ENCODE measurements at regions of chr6 and their contacts with region 1.

Region 1: DNA sequence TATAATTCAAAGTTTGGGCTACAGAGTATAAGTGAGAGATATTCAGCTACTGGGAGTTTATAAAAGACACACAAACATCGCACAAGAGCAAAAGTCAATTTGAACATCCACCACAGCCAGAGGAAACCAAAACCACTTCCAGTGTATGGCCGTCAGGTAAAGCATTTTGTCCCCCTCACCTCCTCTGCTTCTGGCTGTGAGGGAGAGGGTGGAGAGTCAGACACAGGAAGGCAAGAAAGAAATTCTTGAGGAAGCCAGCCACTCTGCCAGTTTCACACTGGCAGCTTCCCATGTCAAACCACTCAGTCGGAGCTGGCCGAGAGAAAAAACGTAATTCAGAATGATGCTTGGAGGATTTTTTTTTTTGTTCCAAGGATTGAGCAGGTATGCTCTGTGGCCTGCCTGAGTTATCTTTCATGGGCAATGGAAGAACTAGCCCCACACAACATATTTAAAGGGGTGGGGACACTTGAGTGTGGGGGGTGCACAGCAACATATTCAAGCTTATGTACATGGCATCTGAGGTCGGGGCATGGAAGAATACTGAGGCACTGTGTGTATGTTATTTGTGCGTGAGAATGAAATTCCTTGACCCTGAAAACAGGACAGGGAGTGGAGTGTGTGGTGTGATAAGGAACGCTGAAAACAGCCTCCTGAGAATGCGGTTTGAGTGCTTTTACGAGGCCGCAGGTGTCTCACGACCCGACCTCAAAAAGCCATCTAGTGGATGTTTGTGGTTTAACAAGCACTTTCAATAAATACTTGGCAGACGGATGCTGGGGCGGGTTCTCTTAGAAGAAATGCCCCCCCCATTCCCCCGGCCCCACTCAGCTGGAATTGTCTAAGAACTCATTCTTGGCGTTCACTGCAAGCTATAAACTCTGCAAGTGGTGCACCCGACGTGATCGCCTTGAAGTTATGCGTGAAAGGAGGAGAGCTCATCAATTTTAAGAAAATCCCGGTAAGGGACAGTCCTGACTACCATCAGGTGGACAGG is 27.5 kb upstream of the ZBTB22 start:
- DNase-seq: peak; percentile 78
- H3K4me3 Mint-ChIP-seq: no peak overlapping the region
- H3K27ac Mint-ChIP-seq: no peak overlapping the region
- H3K4me1 Mint-ChIP-seq: peaks cover 15% of the 10 kb centered on the region
- H3K27me3 Mint-ChIP-seq: no peaks in the 10 kb centered on the region
- CTCF ChIP-seq: peak; percentile 62

Region 2: DNA sequence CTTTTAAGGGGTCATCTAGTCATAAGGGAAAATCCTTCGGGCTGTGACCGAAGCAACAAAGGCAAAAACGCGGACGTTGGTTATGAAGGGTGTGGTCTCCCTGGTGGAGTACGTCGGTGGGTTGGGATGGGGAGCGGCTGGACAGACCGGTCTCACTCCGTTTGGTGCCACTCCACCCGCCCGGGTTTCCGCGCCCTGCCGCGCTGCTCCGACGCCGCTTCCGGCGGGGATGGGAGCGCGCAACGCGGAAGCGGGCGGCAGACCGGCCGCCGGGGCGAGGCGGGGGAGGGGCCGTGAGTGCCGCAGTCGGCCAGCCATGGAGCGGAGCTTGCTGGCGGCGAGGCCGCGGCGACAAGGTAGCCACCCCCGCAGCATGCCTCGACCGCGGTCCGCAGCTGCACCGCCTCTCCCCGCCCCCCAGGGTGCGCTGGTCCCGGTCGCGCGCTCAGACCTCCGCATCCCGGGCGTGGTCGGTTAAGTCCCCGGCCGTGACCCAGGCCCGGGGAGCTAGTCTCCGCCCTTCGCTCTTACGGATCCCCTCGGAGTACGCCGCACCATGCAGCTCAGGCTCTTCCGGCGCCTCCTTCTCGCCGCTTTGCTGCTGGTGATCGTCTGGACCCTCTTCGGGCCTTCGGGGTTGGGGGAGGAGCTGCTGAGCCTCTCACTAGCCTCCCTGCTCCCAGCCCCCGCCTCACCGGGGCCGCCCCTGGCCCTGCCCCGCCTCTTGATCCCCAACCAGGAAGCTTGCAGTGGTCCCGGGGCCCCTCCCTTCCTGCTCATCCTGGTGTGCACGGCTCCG is 67.9 kb before region 1 on chr6 and contains the start of gene B3GALT4:
- CTCF ChIA-PET with region 1: no interaction called
- POLR2A ChIA-PET with region 1: interaction called, 3 read pairs
- intact Hi-C with region 1: loop called (anchors 5 kb)
- DNase-seq: peak; percentile 72
- H3K4me3 Mint-ChIP-seq: peak within 1 kb of the TSS; percentile 99
- H3K27ac Mint-ChIP-seq: peak within 1 kb of the TSS; percentile 80
- H3K4me1 Mint-ChIP-seq: peaks cover 30% of the 10 kb centered on the region
- H3K27me3 Mint-ChIP-seq: no peaks in the 10 kb centered on the region
- CTCF ChIP-seq: peak; percentile 52
- total RNA-seq, gene B3GALT4: 0.37 and 0.58 TPM in 2 replicates

Region 3: DNA sequence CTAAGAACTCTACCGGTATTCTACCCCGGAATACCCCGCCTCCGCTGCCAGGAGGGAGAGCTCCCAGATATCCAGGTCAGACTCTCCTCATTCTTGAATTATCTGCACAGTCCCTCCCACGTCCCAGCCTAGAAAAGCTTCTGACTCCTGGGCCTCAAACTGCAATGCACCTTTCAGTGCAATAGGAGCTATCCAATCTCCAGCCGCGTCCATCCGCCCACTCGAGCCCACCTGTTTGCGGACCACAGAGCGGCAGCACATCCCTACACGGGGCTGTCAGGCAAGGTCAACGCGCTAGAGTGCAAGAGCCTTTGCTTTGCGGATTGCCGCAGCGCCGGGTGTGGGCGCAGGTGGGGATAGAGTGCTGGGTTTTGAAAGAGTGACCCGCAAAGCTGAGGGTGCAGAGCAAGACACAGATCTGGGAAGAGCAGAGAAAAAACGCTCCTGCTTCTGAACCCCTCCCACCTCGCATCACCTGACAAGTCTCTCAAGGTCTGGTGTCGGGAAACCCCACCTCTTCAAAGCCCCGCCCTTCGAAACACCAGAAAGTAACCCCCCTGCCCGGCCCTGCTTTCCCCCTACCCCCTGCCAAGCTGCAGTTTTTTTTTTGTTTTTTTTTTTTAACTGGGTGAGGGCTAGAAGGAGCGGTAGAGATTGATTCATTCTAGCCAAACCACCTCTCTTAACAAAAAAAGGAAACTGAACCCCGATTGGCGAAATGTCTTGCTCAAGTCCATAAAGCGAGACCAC is 32.4 kb before region 1 on chr6:
- CTCF ChIA-PET with region 1: interaction called, 11 read pairs
- POLR2A ChIA-PET with region 1: interaction called, 10 read pairs
- intact Hi-C with region 1: no loop called
- DNase-seq: peak; percentile 87
- H3K4me3 Mint-ChIP-seq: peak overlapping the region; percentile 96
- H3K27ac Mint-ChIP-seq: peak overlapping the region; percentile 99
- H3K4me1 Mint-ChIP-seq: peaks cover 31% of the 10 kb centered on the region
- H3K27me3 Mint-ChIP-seq: no peaks in the 10 kb centered on the region
- CTCF ChIP-seq: no peak

Region 4: GRCh38 chr6:33356295-33356694 is 11.3 kb after region 1 on chr6:
- CTCF ChIA-PET with region 1: interaction called, 10 read pairs
- POLR2A ChIA-PET with region 1: interaction called, 3 read pairs
- intact Hi-C with region 1: no loop called
- DNase-seq: no peak
- H3K4me3 Mint-ChIP-seq: no peak overlapping the region
- H3K27ac Mint-ChIP-seq: no peak overlapping the region
- H3K4me1 Mint-ChIP-seq: no peaks in the 10 kb centered on the region
- H3K27me3 Mint-ChIP-seq: no peaks in the 10 kb centered on the region
- CTCF ChIP-seq: no peak

Region 5: GRCh38 chr6:33391278-33391921 is 46.4 kb after region 1 on chr6 and contains the start of gene KIFC1:
- CTCF ChIA-PET with region 1: interaction called, 4 read pairs
- POLR2A ChIA-PET with region 1: interaction called, 3 read pairs
- intact Hi-C with region 1: loop called (anchors 1 kb)
- DNase-seq: peak; percentile 99
- H3K4me3 Mint-ChIP-seq: peak within 1 kb of the TSS; percentile 81
- H3K27ac Mint-ChIP-seq: peak within 1 kb of the TSS; percentile 72
- H3K4me1 Mint-ChIP-seq: peaks cover 37% of the 10 kb centered on the region
- H3K27me3 Mint-ChIP-seq: no peaks in the 10 kb centered on the region
- CTCF ChIP-seq: peak; percentile 89
- total RNA-seq, gene KIFC1: 20.3 and 27.1 TPM in 2 replicates

Measured in MCF 10A (cell line).